Right lobe of liver (tissue), 6 donors: ENCODE measurements at regions of chr7 and their contacts with region 1.

Region 1: DNA sequence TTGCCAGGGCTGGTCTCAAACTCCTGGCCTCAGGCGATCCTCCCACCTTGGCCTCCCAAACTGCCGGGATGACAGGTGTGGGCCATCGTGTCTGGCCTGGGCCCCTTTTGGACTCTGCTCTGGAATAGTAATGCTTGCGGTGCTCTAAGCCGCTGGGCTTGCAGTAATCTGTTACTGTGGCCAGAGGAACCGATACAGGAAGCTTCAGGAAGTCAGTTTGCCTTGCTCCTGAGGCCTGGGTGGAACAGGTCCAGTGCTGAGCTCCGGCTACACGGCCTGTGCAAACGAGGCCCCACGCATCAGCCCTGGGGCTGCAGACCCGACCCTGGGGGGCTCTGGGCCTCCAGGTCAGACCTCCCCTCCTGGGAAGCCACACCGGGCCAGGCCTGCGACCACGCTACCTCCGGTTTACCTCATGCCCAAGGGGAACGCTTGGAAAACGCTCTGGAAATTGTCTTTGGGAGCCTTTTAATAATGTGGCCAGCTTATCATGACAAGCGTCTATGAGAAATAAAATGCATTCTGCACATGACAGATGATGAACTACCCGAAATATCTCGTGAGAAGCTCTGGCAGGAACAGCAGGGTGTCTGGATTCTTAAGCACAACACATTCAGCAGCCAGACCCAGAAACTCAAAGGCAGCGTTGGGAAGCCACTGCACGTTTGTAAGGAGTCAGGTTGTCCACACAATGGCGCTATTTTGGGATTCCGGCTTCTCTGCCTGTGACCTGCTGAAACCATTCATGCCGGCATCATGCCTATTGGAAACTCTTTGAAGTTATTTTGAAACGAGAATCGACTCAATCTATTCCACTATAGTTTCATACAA is 10.1 kb upstream of the ADAP1 start:
- DNase-seq: peak in 2 of 3 donors; percentile 24 to 58
- ATAC-seq: peak; percentile 34 to 66 (median 48)
- H3K4me3 ChIP-seq: no peak overlapping the region
- H3K27ac ChIP-seq: peak overlapping the region in 1 of 3 donors; percentile 8
- H3K4me1 ChIP-seq: peaks cover 0 to 4% (median 0%) of the 10 kb centered on the region in 4 donors
- H3K27me3 ChIP-seq: no peaks in the 10 kb centered on the region
- CTCF ChIP-seq: no peak
- POLR2A ChIP-seq: no peak

Region 2: GRCh38 chr7:897771-898376 is 66.7 kb before region 1 on chr7:
- intact Hi-C with region 1: loop called in 1 of 2 experiments (anchors 5 kb)
- DNase-seq: peak in 1 of 3 donors; percentile 69
- ATAC-seq: peak; percentile 3 to 48 (median 26)
- H3K4me3 ChIP-seq: no peak overlapping the region
- H3K27ac ChIP-seq: no peak overlapping the region
- H3K4me1 ChIP-seq: peaks cover 0 to 10% (median 0%) of the 10 kb centered on the region in 4 donors
- H3K27me3 ChIP-seq: no peaks in the 10 kb centered on the region
- CTCF ChIP-seq: no peak
- POLR2A ChIP-seq: no peak